Activated CD4-positive, alpha-beta T cell treated with anti-CD3 and anti-CD28 coated beads for 36 hours (primary cell): ENCODE measurements at regions of chr15 and their contacts with region 1.

Region 1: GRCh38 chr15:59688841-59689625 is at the start of gene BNIP2:
- DNase-seq: peak; percentile 99
- ATAC-seq: peak; percentile 87
- H3K4me3 Mint-ChIP-seq: peak within 1 kb of the TSS; percentile 80
- H3K27ac Mint-ChIP-seq: peak within 1 kb of the TSS; percentile 98
- H3K4me1 Mint-ChIP-seq: peaks cover 41% of the 10 kb centered on the region
- H3K27me3 Mint-ChIP-seq: no peaks in the 10 kb centered on the region
- total RNA-seq, gene BNIP2: 51.9 to 61.5 TPM

Region 2: GRCh38 chr15:58933281-58934113 is 755.5 kb before region 1 on chr15 and contains the start of gene SLTM:
- CTCF ChIA-PET with region 1: no interaction called
- POLR2A ChIA-PET with region 1: no interaction called
- intact Hi-C with region 1: loop called (anchors 1 kb)
- DNase-seq: peak; percentile 96
- ATAC-seq: peak; percentile 94
- H3K4me3 Mint-ChIP-seq: peak within 1 kb of the TSS; percentile 90
- H3K27ac Mint-ChIP-seq: peak within 1 kb of the TSS; percentile 100
- H3K4me1 Mint-ChIP-seq: peaks cover 17% of the 10 kb centered on the region
- H3K27me3 Mint-ChIP-seq: no peaks in the 10 kb centered on the region
- total RNA-seq, gene SLTM: 85.6 to 85.9 TPM

Region 3: GRCh38 chr15:59570368-59570767 is 118.7 kb before region 1 on chr15:
- CTCF ChIA-PET with region 1: no interaction called
- POLR2A ChIA-PET with region 1: no interaction called
- intact Hi-C with region 1: no loop called
- DNase-seq: no peak
- ATAC-seq: no peak
- H3K4me3 Mint-ChIP-seq: no peak overlapping the region
- H3K27ac Mint-ChIP-seq: no peak overlapping the region
- H3K4me1 Mint-ChIP-seq: no peaks in the 10 kb centered on the region
- H3K27me3 Mint-ChIP-seq: peaks cover 6% of the 10 kb centered on the region

Region 4: GRCh38 chr15:59656897-59657634 is 32.0 kb before region 1 on chr15 and contains the start of gene GTF2A2:
- CTCF ChIA-PET with region 1: interaction called, 6 read pairs
- POLR2A ChIA-PET with region 1: interaction called, 6 read pairs
- intact Hi-C with region 1: loop called (anchors 1 kb)
- DNase-seq: peak; percentile 97
- ATAC-seq: peak; percentile 100
- H3K4me3 Mint-ChIP-seq: no peak within 1 kb of the TSS
- H3K27ac Mint-ChIP-seq: peak within 1 kb of the TSS; percentile 89
- H3K4me1 Mint-ChIP-seq: peaks cover 10% of the 10 kb centered on the region
- H3K27me3 Mint-ChIP-seq: no peaks in the 10 kb centered on the region
- total RNA-seq, gene GTF2A2: 167 to 198 TPM

Region 5: GRCh38 chr15:60006203-60006862 is 317.3 kb after region 1 on chr15:
- CTCF ChIA-PET with region 1: no interaction called
- POLR2A ChIA-PET with region 1: no interaction called
- intact Hi-C with region 1: loop called in 1 of 2 experiments (anchors 1 kb)
- DNase-seq: peak; percentile 84
- ATAC-seq: peak; percentile 73
- H3K4me3 Mint-ChIP-seq: peak overlapping the region; percentile 81
- H3K27ac Mint-ChIP-seq: peak overlapping the region; percentile 88
- H3K4me1 Mint-ChIP-seq: peaks cover 37% of the 10 kb centered on the region
- H3K27me3 Mint-ChIP-seq: peaks cover 84% of the 10 kb centered on the region

Region 6: GRCh38 chr15:60179786-60180391 is 490.9 kb after region 1 on chr15:
- CTCF ChIA-PET with region 1: interaction called, 7 read pairs
- POLR2A ChIA-PET with region 1: no interaction called
- intact Hi-C with region 1: loop called (anchors 1 kb)
- DNase-seq: peak; percentile 48
- ATAC-seq: peak; percentile 44
- H3K4me3 Mint-ChIP-seq: no peak overlapping the region
- H3K27ac Mint-ChIP-seq: no peak overlapping the region
- H3K4me1 Mint-ChIP-seq: no peaks in the 10 kb centered on the region
- H3K27me3 Mint-ChIP-seq: peaks cover 24% of the 10 kb centered on the region

Region 7: GRCh38 chr15:60397772-60398445 is 708.9 kb after region 1 on chr15 and contains the start of gene ANXA2:
- CTCF ChIA-PET with region 1: no interaction called
- POLR2A ChIA-PET with region 1: no interaction called
- intact Hi-C with region 1: loop called in 1 of 2 experiments (anchors 2 kb)
- DNase-seq: peak; percentile 91
- ATAC-seq: peak; percentile 74
- H3K4me3 Mint-ChIP-seq: peak within 1 kb of the TSS; percentile 83
- H3K27ac Mint-ChIP-seq: peak within 1 kb of the TSS; percentile 89
- H3K4me1 Mint-ChIP-seq: peaks cover 36% of the 10 kb centered on the region
- H3K27me3 Mint-ChIP-seq: peaks cover 4% of the 10 kb centered on the region
- total RNA-seq, gene ANXA2: 65.9 to 80.2 TPM

Region 8: DNA sequence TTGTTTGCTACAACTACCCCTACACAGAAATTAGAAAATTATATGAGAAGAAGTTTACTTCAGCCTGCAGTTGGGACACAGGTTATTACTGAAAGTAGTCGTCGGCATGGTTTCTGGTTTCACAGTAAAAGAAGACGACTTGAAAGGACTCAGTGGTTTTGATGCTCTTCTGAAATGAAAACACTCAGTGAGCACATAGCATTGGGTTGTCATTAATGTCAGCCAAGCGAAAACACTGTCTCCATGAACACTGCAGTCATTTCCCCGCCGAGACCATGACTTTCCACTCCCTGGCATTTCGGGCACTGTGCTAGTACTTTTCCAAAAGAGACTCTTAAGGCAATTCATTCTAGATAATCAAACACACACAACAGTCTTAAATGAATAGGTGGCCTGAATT is 859.1 kb after region 1 on chr15:
- CTCF ChIA-PET with region 1: no interaction called
- POLR2A ChIA-PET with region 1: no interaction called
- intact Hi-C with region 1: loop called in 1 of 2 experiments (anchors 1 kb)
- DNase-seq: peak; percentile 84
- ATAC-seq: peak; percentile 83
- H3K4me3 Mint-ChIP-seq: peak overlapping the region; percentile 61
- H3K27ac Mint-ChIP-seq: peak overlapping the region; percentile 96
- H3K4me1 Mint-ChIP-seq: peaks cover 97% of the 10 kb centered on the region
- H3K27me3 Mint-ChIP-seq: no peaks in the 10 kb centered on the region

Region 9: DNA sequence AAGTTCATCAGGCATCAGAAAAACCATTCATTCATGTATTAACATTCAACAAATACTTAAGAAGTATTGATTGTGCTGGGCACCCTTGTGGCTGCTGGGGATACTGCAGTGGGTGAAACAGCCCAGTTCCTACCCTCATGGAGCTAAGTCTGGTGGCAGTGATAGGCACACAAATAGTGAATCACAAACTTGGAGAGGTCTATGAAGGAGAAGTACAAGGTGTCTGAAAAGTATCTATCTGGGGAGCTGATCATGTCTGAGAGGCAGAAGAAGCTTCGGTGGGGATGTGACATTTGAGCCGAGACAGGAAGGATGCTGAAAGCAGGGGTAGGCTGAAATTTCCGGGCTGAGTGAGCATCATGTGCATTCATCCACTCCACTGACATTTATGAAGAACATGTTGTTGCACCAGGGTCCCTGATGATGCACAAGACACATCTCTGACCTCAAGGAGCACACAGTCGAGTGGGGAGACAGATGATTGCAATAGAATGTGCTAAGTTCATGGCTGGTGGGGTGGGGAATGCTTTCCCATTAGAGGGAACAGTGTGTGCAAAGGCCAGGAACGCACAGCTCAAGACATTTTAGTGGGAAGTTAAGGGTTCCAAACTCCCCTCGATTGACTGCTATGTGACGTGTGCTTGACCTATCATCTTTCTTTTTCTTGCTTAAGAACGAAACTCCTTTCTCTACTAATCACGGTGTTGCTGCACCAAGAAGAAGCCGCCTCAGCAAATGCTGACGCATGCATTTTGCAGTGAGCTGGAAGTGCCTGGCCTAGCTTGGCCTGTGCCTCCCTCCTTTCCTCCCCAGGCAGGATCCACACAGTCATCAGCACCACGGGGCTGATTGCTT is 1099.0 kb after region 1 on chr15:
- CTCF ChIA-PET with region 1: no interaction called
- POLR2A ChIA-PET with region 1: no interaction called
- intact Hi-C with region 1: no loop called
- DNase-seq: peak; percentile 70
- ATAC-seq: peak; percentile 81
- H3K4me3 Mint-ChIP-seq: peak overlapping the region; percentile 5
- H3K27ac Mint-ChIP-seq: peak overlapping the region; percentile 52
- H3K4me1 Mint-ChIP-seq: peaks cover 59% of the 10 kb centered on the region
- H3K27me3 Mint-ChIP-seq: no peaks in the 10 kb centered on the region